ENCODE measurements at regions of chrX and their contacts with region 1.

Region 1: GRCh38 chrX:132875650-132876522 is 82.5 kb downstream of the HS6ST2 start:
- DNase-seq: no peak
- H3K4me3 ChIP-seq: no peak overlapping the region
- H3K27ac ChIP-seq: no peak overlapping the region
- H3K4me1 ChIP-seq: no peaks in the 10 kb centered on the region
- H3K27me3 ChIP-seq: peaks cover 0 to 43% of the 10 kb centered on the region in 2 donors
- CTCF ChIP-seq: no peak
- POLR2A ChIP-seq: no peak

Region 2: GRCh38 chrX:132676561-132677186 is 199.2 kb before region 1 on chrX:
- intact Hi-C with region 1: no loop called
- DNase-seq: no peak
- H3K4me3 ChIP-seq: no peak overlapping the region
- H3K27ac ChIP-seq: no peak overlapping the region
- H3K4me1 ChIP-seq: no peaks in the 10 kb centered on the region
- H3K27me3 ChIP-seq: peaks cover 0 to 43% of the 10 kb centered on the region in 2 donors
- CTCF ChIP-seq: no peak
- POLR2A ChIP-seq: no peak

Region 3: GRCh38 chrX:132900633-132901293 is 24.9 kb after region 1 on chrX:
- intact Hi-C with region 1: loop called (anchors 1 kb)
- DNase-seq: no peak
- H3K4me3 ChIP-seq: no peak overlapping the region
- H3K27ac ChIP-seq: no peak overlapping the region
- H3K4me1 ChIP-seq: no peaks in the 10 kb centered on the region
- H3K27me3 ChIP-seq: peaks cover 0 to 26% of the 10 kb centered on the region in 2 donors
- CTCF ChIP-seq: no peak
- POLR2A ChIP-seq: no peak